Breast epithelium (tissue), 4 donors: ENCODE measurements at regions of chr4 and their contacts with region 1.

Region 1: GRCh38 chr4:82555276-82555675 is 6.5 kb downstream of the TMEM150C start:
- DNase-seq: no peak
- H3K4me3 ChIP-seq: no peak overlapping the region
- H3K27ac ChIP-seq: no peak overlapping the region
- H3K4me1 ChIP-seq: no peaks in the 10 kb centered on the region
- H3K27me3 ChIP-seq: no peaks in the 10 kb centered on the region
- CTCF ChIP-seq: no peak
- POLR2A ChIP-seq: no peak

Region 2: DNA sequence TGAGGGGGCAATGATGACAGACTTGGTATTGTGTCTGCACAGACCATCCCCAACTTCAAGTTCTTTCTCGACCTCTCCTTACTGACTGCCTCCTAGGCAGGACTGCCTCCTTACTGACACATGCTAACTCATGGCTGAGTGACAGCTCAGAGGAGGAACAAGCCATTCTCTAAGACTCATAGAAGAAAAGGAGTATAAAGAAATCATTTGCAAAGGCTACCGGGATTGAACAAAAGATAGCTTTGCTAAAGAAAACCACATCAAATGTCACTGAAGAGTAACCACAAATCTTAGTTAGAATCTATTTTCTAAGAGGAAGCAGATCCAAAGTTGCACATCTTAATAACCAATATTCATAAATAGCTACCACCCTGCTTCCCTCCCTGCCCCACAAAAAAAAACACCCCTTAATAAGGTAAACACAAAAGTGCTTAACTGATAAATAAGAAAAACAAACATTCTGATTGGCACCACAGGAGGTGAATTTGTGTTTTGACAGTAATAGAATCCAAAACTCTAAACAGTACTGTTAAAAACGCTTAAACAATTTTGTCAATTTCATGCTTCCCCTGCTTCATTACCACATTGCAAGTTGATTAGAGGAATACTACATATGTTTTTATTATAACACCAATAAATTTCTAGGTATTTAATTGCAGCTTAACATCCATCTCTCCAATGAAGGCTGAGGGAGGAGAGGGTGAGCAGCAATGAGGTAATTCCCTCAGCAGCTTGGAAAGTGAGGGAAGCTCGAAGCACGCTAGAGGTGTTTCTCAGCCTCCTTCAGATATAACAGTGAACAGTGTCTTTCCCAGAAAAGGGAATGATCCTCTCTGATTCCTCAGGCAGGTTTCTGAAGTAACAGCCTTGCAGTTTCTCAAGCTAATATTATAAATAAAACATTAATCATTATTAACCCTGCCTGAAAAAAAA is 341.5 kb before region 1 on chr4:
- intact Hi-C with region 1: no loop called
- DNase-seq: no peak
- H3K4me3 ChIP-seq: no peak overlapping the region
- H3K27ac ChIP-seq: no peak overlapping the region
- H3K4me1 ChIP-seq: no peaks in the 10 kb centered on the region
- H3K27me3 ChIP-seq: no peaks in the 10 kb centered on the region
- CTCF ChIP-seq: no peak
- POLR2A ChIP-seq: no peak

Region 3: GRCh38 chr4:82578935-82579334 is 23.7 kb after region 1 on chr4:
- intact Hi-C with region 1: no loop called
- DNase-seq: no peak
- H3K4me3 ChIP-seq: no peak overlapping the region
- H3K27ac ChIP-seq: no peak overlapping the region
- H3K4me1 ChIP-seq: no peaks in the 10 kb centered on the region
- H3K27me3 ChIP-seq: no peaks in the 10 kb centered on the region
- CTCF ChIP-seq: no peak
- POLR2A ChIP-seq: no peak

Region 4: DNA sequence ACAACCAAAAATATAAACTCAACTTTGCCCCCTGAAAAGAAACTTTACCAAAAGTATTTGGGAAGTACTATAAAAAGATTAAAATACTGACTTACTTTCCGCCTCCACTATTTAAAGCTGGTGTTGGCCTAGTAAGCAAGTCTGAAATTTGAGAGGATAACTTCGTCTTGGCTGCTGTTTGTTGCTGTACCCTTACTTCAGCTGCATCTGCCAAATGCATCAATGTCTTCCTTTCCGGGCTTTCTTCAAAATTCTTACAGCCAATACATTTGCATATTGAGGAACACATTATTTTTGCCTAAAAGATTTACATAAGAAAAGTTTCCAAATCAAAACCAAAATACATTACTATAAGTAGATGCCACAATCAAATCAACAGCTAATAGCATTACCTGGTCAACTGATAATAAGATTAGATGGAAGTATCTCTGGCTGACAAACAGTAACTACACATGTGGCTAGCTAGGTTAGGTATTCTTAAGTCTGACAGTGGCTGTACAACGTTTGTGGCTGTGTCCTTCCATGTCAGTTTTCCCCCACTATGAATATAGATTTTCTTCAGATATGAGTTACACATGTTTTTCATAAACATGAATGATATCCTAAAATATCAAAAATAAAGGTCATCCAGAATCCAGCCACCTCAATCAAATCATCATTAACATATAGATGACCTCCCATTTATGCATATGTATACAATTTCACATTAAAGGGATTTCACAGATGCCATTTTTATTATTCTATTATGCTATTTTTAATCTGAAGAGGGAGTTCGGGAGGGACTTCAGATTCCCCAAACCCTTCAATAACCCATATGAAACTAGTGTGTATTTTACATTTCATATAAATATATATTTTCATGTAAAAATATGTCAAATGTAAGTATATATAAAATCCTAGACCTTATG is 375.8 kb after region 1 on chr4:
- intact Hi-C with region 1: loop called (anchors 5 kb)
- DNase-seq: no peak
- H3K4me3 ChIP-seq: no peak overlapping the region
- H3K27ac ChIP-seq: no peak overlapping the region
- H3K4me1 ChIP-seq: no peaks in the 10 kb centered on the region
- H3K27me3 ChIP-seq: no peaks in the 10 kb centered on the region
- CTCF ChIP-seq: no peak
- POLR2A ChIP-seq: no peak